ENCODE measurements at regions of chr6 and their contacts with region 1.

Region 1: GRCh38 chr6:125191916-125192609 is 38.5 kb downstream of the TPD52L1 start:
- DNase-seq: peak; percentile 57
- H3K4me3 Mint-ChIP-seq: no peak overlapping the region
- H3K27ac Mint-ChIP-seq: no peak overlapping the region
- H3K4me1 Mint-ChIP-seq: peaks cover 22% of the 10 kb centered on the region
- H3K27me3 Mint-ChIP-seq: no peaks in the 10 kb centered on the region
- CTCF ChIP-seq: peak; percentile 49

Region 2: DNA sequence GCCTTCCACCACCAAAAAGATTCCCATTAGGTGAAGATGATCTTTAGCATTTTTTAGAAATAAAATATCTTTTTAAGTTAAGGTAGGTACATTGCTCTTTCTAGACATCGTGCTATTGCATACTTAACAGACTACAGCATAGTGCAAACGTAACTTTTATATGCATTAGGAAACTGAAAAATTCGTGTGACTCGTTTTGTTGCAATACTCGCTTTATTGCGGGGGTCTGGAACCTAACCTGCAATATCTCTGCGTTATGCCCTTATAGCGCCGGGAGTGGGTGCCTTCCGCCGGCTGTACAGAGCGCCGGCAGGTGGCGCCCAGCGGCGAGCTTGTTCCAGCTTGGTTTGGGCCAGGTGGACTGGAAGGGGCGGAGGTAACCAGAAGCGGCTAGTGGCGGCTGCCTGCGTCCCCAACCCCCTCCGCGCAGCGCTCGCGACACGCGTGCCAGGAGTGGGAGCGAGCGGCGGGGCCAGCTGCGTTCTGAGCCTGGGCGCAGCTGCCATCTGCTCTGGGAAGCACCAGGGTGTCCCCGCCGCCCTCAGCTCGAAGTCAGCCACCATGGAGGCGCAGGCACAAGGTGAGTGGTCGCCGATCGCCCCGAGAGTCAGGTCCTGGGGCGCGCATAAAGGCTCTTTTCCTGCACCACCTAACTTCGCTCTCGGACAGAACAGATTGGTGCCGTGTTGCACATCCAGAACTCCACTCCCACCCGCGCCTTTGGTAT is 38.5 kb before region 1 on chr6 and contains the start of gene TPD52L1:
- CTCF ChIA-PET with region 1: interaction called, 7 read pairs
- intact Hi-C with region 1: loop called (anchors 5 kb)
- DNase-seq: peak; percentile 82
- H3K4me3 Mint-ChIP-seq: peak within 1 kb of the TSS; percentile 77
- H3K27ac Mint-ChIP-seq: peak within 1 kb of the TSS; percentile 36
- H3K4me1 Mint-ChIP-seq: no peaks in the 10 kb centered on the region
- H3K27me3 Mint-ChIP-seq: no peaks in the 10 kb centered on the region
- CTCF ChIP-seq: peak; percentile 70
- total RNA-seq, gene TPD52L1: 37.5 and 50.6 TPM in 2 replicates

Region 3: DNA sequence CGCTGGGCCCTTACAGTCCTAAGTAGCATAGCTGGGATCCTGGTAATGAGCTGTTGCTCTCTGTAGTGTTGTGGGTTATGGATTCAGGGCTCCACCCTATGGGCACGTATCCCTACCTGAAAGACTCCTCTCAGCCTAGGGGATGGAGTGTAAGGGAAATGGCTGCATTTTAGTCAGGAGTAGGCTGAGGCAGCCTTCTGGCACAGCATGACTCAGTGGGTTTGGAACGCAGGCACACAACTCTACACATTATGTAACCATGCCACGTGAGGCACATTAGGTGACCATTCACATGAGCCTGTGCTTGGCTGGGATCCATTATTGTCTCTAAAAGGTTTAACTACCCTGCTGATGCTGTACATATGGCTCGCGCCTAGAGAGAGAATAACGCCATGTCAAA is 81.9 kb after region 1 on chr6:
- CTCF ChIA-PET with region 1: no interaction called
- intact Hi-C with region 1: loop called (anchors 5 kb)
- DNase-seq: peak; percentile 81
- H3K4me3 Mint-ChIP-seq: no peak overlapping the region
- H3K27ac Mint-ChIP-seq: peak overlapping the region; percentile 74
- H3K4me1 Mint-ChIP-seq: peaks cover 9% of the 10 kb centered on the region
- H3K27me3 Mint-ChIP-seq: no peaks in the 10 kb centered on the region
- CTCF ChIP-seq: no peak

Region 4: GRCh38 chr6:125301435-125302391 is 109.7 kb after region 1 on chr6 and contains the start of gene HDDC2:
- CTCF ChIA-PET with region 1: no interaction called
- intact Hi-C with region 1: loop called (anchors 10 kb)
- DNase-seq: peak; percentile 58
- H3K4me3 Mint-ChIP-seq: peak within 1 kb of the TSS; percentile 77
- H3K27ac Mint-ChIP-seq: peak within 1 kb of the TSS; percentile 48
- H3K4me1 Mint-ChIP-seq: peaks cover 20% of the 10 kb centered on the region
- H3K27me3 Mint-ChIP-seq: no peaks in the 10 kb centered on the region
- CTCF ChIP-seq: no peak
- total RNA-seq, gene HDDC2: 22.4 and 24.2 TPM in 2 replicates

Measured in Calu3 (cell line).